GM12878 (cell line): ENCODE measurements at regions of chr2 and their contacts with region 1.

Region 1: GRCh38 chr2:80467262-80467811 is 162.8 kb upstream of the LRRTM1 start:
- DNase-seq: no peak
- ATAC-seq: peak; percentile 35
- H3K4me3 ChIP-seq: no peak overlapping the region
- H3K27ac ChIP-seq: peak overlapping the region; percentile 44
- H3K4me1 ChIP-seq: peaks cover 5% of the 10 kb centered on the region
- H3K27me3 ChIP-seq: no peaks in the 10 kb centered on the region
- CTCF ChIP-seq: no peak
- EP300 ChIP-seq: peak in 1 of 2 experiments; percentile 66; a peak in 2 of 4 replicates
- POLR2A ChIP-seq: no peak
- RAD21 ChIP-seq: no peak

Region 2: DNA sequence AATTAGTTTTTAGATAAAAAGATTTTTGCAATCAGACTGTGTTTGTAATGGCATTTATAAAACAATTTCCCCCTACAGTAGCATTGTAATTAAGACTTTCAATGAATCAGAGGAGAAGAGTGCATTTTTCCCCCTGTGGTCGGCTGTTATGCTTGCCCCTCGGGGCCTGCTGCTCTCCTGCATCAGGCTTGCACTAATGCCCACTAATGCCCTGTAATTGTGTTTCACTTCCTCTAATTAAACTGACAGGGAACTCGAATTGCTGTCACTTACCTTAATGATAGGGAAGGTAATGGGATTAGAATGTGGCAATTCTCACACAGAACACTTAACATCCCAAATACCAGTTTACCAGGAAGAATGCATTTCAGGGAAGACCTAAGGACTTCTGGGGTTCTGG is 101.6 kb before region 1 on chr2:
- CTCF ChIA-PET with region 1: no interaction called
- POLR2A ChIA-PET with region 1: interaction called, 10 read pairs
- RAD21 ChIA-PET with region 1: interaction called, 8 read pairs
- SMC1A ChIA-PET with region 1: interaction called, 3 read pairs
- in situ Hi-C with region 1: no loop called
- intact Hi-C with region 1: no loop called
- DNase-seq: no peak
- ATAC-seq: peak; percentile 89
- H3K4me3 ChIP-seq: no peak overlapping the region
- H3K27ac ChIP-seq: no peak overlapping the region
- H3K4me1 ChIP-seq: no peaks in the 10 kb centered on the region
- H3K27me3 ChIP-seq: no peaks in the 10 kb centered on the region
- CTCF ChIP-seq: no peak
- EP300 ChIP-seq: peak in 1 of 2 experiments; percentile 48; a peak in 1 of 4 replicates
- POLR2A ChIP-seq: no peak
- RAD21 ChIP-seq: no peak

Region 3: GRCh38 chr2:80482276-80482675 is 14.9 kb after region 1 on chr2:
- CTCF ChIA-PET with region 1: interaction called, 34 read pairs
- POLR2A ChIA-PET with region 1: interaction called, 141 read pairs
- RAD21 ChIA-PET with region 1: interaction called, 284 read pairs
- SMC1A ChIA-PET with region 1: interaction called, 510 read pairs
- in situ Hi-C with region 1: no loop called
- intact Hi-C with region 1: no loop called
- DNase-seq: no peak
- ATAC-seq: peak; percentile 29
- H3K4me3 ChIP-seq: no peak overlapping the region
- H3K27ac ChIP-seq: no peak overlapping the region; the same call in 1 of the 2 replicates
- H3K4me1 ChIP-seq: 0 out of 2 replicates have a peak, but pooled peaks cover 4% of the 10 kb centered on the region
- H3K27me3 ChIP-seq: no peaks in the 10 kb centered on the region
- CTCF ChIP-seq: no peak
- EP300 ChIP-seq: no peak
- POLR2A ChIP-seq: no peak
- RAD21 ChIP-seq: no peak